H1 (cell line): ENCODE measurements at regions of chr15 and their contacts with region 1.

Region 1: DNA sequence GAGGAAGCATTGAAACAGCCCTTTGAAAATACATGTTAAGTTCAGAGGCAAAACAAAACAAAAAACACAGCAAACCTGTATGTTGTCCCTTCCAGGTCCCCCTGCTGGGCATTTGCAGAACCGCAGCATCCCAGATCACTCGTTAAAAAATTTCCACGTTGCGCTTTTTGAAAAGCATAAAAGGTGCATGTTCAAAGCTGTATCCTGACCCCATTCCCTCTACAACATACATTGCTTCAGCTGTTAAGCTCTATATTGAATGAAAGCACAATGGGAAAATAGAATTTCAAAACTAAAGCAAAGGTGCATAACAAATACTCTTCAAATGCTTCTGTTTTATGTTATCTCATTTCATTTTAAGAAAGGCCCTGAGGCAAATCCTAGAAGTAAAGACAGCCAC is 328.3 kb downstream of the THSD4 start:
- DNase-seq: peak in 1 of 2 experiments; percentile 79
- H3K4me3 ChIP-seq: no peak overlapping the region
- H3K27ac ChIP-seq: no peak overlapping the region
- H3K4me1 ChIP-seq: peaks cover 0 to 6% (median 3%) of the 10 kb centered on the region in 4 experiments; a peak in 3 of 7 replicates
- H3K27me3 ChIP-seq: no peaks in the 10 kb centered on the region
- CTCF ChIP-seq: peak; percentile 59 to 66 (median 65)
- EP300 ChIP-seq: no peak
- POLR2A ChIP-seq: no peak
- RAD21 ChIP-seq: peak; percentile 49 to 62

Region 2: DNA sequence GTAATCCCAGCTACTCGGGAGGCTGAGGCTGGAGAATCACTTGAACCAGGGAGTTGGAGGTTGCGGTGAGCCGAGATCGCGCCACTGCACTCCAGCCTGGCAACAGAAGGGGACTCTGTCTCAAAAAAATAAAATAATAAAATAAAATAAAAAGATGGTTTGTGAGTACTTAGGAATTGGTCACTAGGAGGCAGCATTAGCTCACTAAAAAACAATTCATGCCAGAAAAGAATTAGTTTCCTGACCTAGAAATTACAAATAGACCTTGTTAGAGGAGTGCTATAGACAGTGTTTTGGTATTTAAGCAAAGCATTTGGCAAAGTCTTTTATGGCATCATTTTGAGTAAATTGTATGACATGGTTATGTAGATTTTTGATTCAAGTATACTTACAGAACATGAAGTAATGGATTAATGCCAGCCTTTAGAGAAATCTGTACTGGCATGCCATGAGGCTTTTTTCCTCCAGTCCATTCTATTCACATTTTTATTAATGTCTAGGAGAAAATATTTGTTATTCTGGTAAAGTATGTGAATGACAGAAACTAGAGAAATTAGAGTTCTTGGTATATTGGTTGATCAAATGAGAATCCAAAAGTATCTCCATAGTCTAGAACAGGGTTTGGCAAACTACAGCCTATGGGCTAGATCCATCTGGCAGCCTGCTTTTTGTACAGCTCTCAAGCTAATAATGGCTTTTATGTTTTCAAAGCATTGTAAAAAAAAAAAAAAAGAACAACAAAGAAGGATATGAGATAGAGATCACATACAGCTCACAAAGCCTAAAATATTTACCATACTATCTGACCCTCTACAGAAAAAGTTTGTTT is 469.3 kb before region 1 on chr15:
- CTCF ChIA-PET with region 1: interaction called, 11 read pairs
- POLR2A ChIA-PET with region 1: no interaction called
- DNase-seq: peak in 1 of 2 experiments; percentile 42
- H3K4me3 ChIP-seq: no peak overlapping the region
- H3K27ac ChIP-seq: no peak overlapping the region
- H3K4me1 ChIP-seq: no peaks in the 10 kb centered on the region
- H3K27me3 ChIP-seq: no peaks in the 10 kb centered on the region
- CTCF ChIP-seq: peak in 2 of 3 experiments; percentile 31 to 37; a peak in 2 of 4 replicates
- EP300 ChIP-seq: no peak
- POLR2A ChIP-seq: no peak
- RAD21 ChIP-seq: peak; percentile 58 to 68

Region 3: GRCh38 chr15:71195240-71195639 is 248.3 kb before region 1 on chr15:
- CTCF ChIA-PET with region 1: interaction called, 12 read pairs
- POLR2A ChIA-PET with region 1: no interaction called
- DNase-seq: peak in 1 of 2 experiments; percentile 46
- H3K4me3 ChIP-seq: no peak overlapping the region
- H3K27ac ChIP-seq: no peak overlapping the region
- H3K4me1 ChIP-seq: peaks cover 0 to 3% (median under 1%) of the 10 kb centered on the region in 4 experiments; a peak in 1 of 7 replicates
- H3K27me3 ChIP-seq: peaks cover 0 to 4% (median under 1%) of the 10 kb centered on the region in 4 experiments; a peak in 2 of 7 replicates
- CTCF ChIP-seq: peak in 2 of 3 experiments; percentile 69 to 78; a peak in 3 of 4 replicates
- EP300 ChIP-seq: no peak
- POLR2A ChIP-seq: no peak
- RAD21 ChIP-seq: peak; percentile 72 to 85

Region 4: GRCh38 chr15:71332431-71333004 is 111.0 kb before region 1 on chr15:
- CTCF ChIA-PET with region 1: no interaction called
- POLR2A ChIA-PET with region 1: no interaction called
- DNase-seq: no peak
- H3K4me3 ChIP-seq: no peak overlapping the region
- H3K27ac ChIP-seq: no peak overlapping the region
- H3K4me1 ChIP-seq: peaks cover 4 to 13% (median 9%) of the 10 kb centered on the region in 4 experiments
- H3K27me3 ChIP-seq: no peaks in the 10 kb centered on the region
- CTCF ChIP-seq: no peak
- EP300 ChIP-seq: no peak
- POLR2A ChIP-seq: no peak
- RAD21 ChIP-seq: no peak

Region 5: DNA sequence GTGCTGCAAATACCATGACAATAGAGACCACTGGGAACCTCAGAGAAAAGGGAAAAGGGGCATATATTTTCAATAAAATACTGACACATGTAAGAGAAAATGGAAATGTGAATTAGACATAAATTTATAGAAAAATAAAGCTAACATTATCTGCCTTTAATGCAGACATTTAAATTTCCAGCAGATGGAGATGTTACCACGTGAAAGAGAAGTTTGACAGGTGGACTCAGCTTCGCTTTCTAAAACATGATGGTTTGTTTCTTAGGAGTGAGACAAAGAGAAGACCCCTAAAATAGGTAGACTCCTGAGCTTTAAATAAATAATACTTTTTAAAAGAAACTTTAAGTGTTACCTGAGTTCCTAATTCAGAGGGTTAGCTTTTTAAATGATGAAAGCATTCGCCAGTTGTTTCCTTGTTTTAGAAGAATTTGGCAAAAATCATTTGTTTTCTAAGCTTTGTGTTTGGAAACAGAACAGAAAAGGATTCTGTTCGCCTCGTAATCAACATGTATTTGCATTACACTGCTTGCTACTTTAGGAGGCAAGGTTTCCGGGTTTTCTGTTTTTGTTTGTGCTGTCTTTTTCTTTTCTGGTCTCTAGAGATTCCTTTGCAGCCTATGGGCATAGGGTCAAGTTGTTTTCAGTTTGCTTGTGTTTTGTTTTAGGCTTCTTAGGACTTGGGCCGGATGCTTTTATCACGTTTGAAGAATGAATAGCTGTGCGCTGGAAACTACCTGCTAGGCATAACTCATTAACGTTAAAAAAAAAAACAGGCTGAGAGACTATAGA is 56.9 kb before region 1 on chr15:
- CTCF ChIA-PET with region 1: interaction called, 61 read pairs
- POLR2A ChIA-PET with region 1: no interaction called
- DNase-seq: no peak
- H3K4me3 ChIP-seq: peak overlapping the region in 1 of 4 experiments; percentile 30; a peak in 3 of 8 replicates
- H3K27ac ChIP-seq: peak overlapping the region; percentile 5; the same call in 1 of the 2 replicates
- H3K4me1 ChIP-seq: peaks cover 15 to 24% (median 19%) of the 10 kb centered on the region in 4 experiments; a peak in 6 of 7 replicates
- H3K27me3 ChIP-seq: no peaks in the 10 kb centered on the region
- CTCF ChIP-seq: peak in 1 of 3 experiments; percentile 42; a peak in 1 of 4 replicates
- EP300 ChIP-seq: peak in 1 of 2 experiments; percentile 47; a peak in 1 of 3 replicates
- POLR2A ChIP-seq: no peak; a peak in 1 of 3 replicates
- RAD21 ChIP-seq: peak; percentile 72 to 75

Region 6: GRCh38 chr15:71425388-71425787 is 18.1 kb before region 1 on chr15:
- CTCF ChIA-PET with region 1: interaction called, 12 read pairs
- POLR2A ChIA-PET with region 1: no interaction called
- DNase-seq: no peak
- H3K4me3 ChIP-seq: no peak overlapping the region
- H3K27ac ChIP-seq: no peak overlapping the region
- H3K4me1 ChIP-seq: peaks cover 0 to 4% (median 2%) of the 10 kb centered on the region in 4 experiments; a peak in 2 of 7 replicates
- H3K27me3 ChIP-seq: no peaks in the 10 kb centered on the region
- CTCF ChIP-seq: no peak
- EP300 ChIP-seq: no peak
- POLR2A ChIP-seq: no peak
- RAD21 ChIP-seq: no peak